Testis (tissue), 5 donors: ENCODE measurements at regions of chr11 and their contacts with region 1.

Region 1: DNA sequence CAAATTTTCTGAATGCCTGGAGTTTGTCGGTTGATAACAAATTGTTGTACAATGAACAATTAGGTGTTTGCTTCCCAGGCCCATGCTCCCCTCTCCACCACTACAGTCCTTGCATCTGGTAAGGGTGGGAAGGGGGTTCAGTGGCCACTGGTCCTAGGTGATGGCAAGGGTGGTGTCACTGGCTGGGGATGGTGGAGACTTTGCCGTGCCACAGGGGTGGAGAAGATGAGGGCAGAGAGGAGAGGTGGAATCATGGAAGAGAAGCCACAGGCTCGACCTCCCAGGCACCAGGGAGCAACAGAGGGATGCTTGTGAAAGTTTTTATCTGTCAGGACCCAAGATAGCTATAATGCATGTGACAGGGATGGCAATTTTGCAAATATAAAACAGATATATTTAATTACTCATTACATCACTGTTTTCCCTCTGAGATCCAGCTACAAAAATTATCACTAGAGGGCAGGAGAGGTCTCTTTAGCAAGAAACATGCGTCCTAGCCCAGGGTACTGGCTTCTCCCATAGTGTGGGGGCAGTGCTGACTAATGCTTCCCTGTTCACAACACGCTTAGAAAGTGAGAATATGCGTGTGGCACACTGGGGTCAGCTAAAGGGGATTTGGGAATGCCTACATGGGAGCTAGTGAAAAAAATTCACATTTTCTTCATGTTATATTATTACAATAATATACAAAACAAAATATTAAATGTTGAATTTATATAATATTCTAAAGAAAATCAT is 49.0 kb upstream of the AMPD3 start:
- DNase-seq: peak; percentile 84
- H3K4me3 ChIP-seq: no peak overlapping the region
- H3K27ac ChIP-seq: no peak overlapping the region
- H3K4me1 ChIP-seq: peaks cover 4% of the 10 kb centered on the region
- H3K27me3 ChIP-seq: no peaks in the 10 kb centered on the region
- CTCF ChIP-seq: peak; percentile 55 to 72 (median 66)
- POLR2A ChIP-seq: no peak

Region 2: GRCh38 chr11:10044618-10045017 is 361.4 kb before region 1 on chr11:
- intact Hi-C with region 1: no loop called
- DNase-seq: no peak
- H3K4me3 ChIP-seq: no peak overlapping the region
- H3K27ac ChIP-seq: no peak overlapping the region
- H3K4me1 ChIP-seq: peaks cover 2% of the 10 kb centered on the region
- H3K27me3 ChIP-seq: no peaks in the 10 kb centered on the region
- CTCF ChIP-seq: no peak
- POLR2A ChIP-seq: no peak

Region 3: GRCh38 chr11:10735481-10736475 is 329.8 kb after region 1 on chr11:
- intact Hi-C with region 1: loop called (anchors 10 kb)
- DNase-seq: peak; percentile 97
- H3K4me3 ChIP-seq: no peak overlapping the region
- H3K27ac ChIP-seq: peak overlapping the region; percentile 39 to 71
- H3K4me1 ChIP-seq: peaks cover 12% of the 10 kb centered on the region
- H3K27me3 ChIP-seq: no peaks in the 10 kb centered on the region
- CTCF ChIP-seq: peak; percentile 97 to 99 (median 98)
- POLR2A ChIP-seq: no peak

Region 4: GRCh38 chr11:11735586-11735985 is 1329.6 kb after region 1 on chr11:
- intact Hi-C with region 1: no loop called
- DNase-seq: no peak
- H3K4me3 ChIP-seq: no peak overlapping the region
- H3K27ac ChIP-seq: no peak overlapping the region
- H3K4me1 ChIP-seq: no peaks in the 10 kb centered on the region
- H3K27me3 ChIP-seq: no peaks in the 10 kb centered on the region
- CTCF ChIP-seq: no peak
- POLR2A ChIP-seq: no peak